ENCODE measurements at regions of chr20 and their contacts with region 1.

Region 1: DNA sequence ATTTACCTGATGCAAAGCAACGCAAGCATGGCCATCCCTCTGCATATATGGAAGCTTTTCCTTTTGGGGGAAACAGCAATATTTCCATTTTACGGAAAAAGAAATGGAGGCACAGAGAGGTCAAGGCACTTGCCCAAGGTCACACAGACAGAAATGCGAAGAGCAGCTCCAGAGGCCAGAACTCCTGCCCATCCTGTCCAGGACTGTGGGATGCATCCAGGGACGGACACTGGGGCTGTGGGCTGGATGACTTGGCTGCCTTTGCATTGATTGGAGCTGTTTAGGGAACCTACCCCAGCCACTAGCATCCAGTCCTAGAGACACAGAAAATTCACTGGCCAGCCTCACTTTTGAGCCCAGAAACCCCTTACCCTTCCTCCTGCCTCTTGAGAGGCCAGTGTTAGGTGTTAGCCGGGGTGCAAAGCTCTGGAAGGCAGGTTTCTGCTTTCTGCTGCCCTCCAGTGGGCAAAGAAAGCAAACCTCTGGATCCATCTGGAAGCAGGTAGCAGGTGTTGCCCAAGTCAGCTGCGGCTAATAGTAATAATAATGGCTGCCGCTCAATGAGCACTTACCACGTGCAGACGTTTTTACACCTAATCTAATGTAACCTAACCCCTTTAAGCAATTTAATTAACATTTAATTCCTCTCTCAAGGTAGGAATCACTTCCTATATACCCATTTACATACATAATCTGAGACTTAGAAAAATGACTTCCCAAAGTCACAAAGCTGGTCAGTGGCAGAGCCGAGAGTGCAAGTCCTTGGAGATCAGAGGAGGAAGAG is 31.7 kb upstream of the CCN5 start:
- DNase-seq: no peak
- H3K4me3 ChIP-seq: no peak overlapping the region
- H3K27ac ChIP-seq: no peak overlapping the region
- H3K4me1 ChIP-seq: no peaks in the 10 kb centered on the region
- H3K27me3 ChIP-seq: no peaks in the 10 kb centered on the region
- CTCF ChIP-seq: peak; percentile 10 to 47 (median 30)
- POLR2A ChIP-seq: no peak

Region 2: DNA sequence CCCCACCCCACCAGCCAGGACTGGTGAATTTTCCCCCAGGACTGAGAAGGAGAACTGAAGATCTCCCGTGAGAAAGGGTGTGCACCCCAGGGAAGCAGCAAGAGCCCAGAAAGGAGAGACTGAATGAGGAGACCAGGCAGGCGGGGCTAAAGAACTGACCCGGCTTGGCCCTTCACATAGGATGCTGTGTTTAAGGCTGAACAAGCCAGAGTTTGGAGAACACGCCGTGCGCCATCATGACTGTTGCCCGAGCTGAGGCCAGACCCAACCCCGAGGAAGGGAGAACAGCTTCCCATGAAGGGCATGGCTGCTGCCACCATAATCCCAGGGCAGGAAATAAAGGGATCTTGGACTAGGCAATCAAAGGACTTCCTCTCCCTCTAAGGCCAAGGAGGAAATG is 1330.5 kb before region 1 on chr20:
- intact Hi-C with region 1: no loop called
- DNase-seq: no peak
- H3K4me3 ChIP-seq: no peak overlapping the region
- H3K27ac ChIP-seq: no peak overlapping the region
- H3K4me1 ChIP-seq: no peaks in the 10 kb centered on the region
- H3K27me3 ChIP-seq: no peaks in the 10 kb centered on the region
- CTCF ChIP-seq: no peak
- POLR2A ChIP-seq: no peak

Region 3: DNA sequence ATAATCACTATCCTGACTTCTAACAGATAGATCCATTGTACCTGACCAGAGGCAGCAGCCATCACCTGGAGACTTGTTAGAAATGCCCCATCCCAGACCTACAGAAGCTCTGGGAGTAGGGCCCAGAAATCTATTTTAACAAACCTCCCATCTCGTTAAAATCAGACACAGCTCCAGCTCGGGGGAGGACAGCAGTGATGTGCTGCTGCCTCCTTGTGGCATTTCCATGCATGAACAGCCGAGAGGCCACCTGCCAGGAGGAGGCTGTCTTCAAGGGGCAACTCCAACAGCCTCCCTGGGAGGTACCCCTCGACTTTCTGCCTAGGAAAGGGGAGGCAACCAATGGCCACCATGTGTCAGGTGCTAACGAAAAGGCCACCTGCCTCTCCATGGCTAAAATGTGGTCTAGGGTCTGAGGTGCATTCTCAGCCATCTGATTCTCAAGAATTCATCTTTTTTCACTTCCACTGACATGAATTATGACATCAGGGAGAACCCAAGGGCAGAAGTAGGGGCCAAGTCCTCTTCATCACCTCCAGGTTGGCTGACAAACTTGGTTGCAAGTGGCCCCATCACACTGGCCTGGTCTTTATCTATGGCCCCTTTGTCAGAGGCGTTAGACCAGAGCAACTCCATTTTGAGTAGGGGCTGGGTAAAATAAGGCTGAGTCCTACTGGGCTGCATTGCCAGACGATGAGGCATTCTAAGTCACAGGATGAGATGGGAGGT is 50.0 kb after region 1 on chr20:
- intact Hi-C with region 1: loop called (anchors 5 kb)
- DNase-seq: peak; percentile 64 to 69
- H3K4me3 ChIP-seq: no peak overlapping the region
- H3K27ac ChIP-seq: no peak overlapping the region
- H3K4me1 ChIP-seq: no peaks in the 10 kb centered on the region
- H3K27me3 ChIP-seq: no peaks in the 10 kb centered on the region
- CTCF ChIP-seq: peak; percentile 73 to 92 (median 90)
- POLR2A ChIP-seq: no peak

Region 4: GRCh38 chr20:44861531-44862006 is 178.1 kb after region 1 on chr20:
- intact Hi-C with region 1: loop called (anchors 10 kb)
- DNase-seq: no peak
- H3K4me3 ChIP-seq: no peak overlapping the region
- H3K27ac ChIP-seq: peak overlapping the region in 1 of 2 donors; percentile 50
- H3K4me1 ChIP-seq: no peaks in the 10 kb centered on the region
- H3K27me3 ChIP-seq: no peaks in the 10 kb centered on the region
- CTCF ChIP-seq: no peak
- POLR2A ChIP-seq: no peak

Region 5: GRCh38 chr20:45347936-45348778 is 664.7 kb after region 1 on chr20 and contains the start of gene SDC4:
- intact Hi-C with region 1: no loop called
- DNase-seq: peak; percentile 69 to 82
- H3K4me3 ChIP-seq: peak within 1 kb of the TSS; percentile 64 to 96 (median 82)
- H3K27ac ChIP-seq: peak within 1 kb of the TSS; percentile 97 to 99
- H3K4me1 ChIP-seq: peaks cover 3 to 13% of the 10 kb centered on the region in 2 donors
- H3K27me3 ChIP-seq: no peaks in the 10 kb centered on the region
- CTCF ChIP-seq: no peak
- POLR2A ChIP-seq: peak; percentile 95
- total RNA-seq, gene SDC4: 29.4 to 337 (median 121) TPM